B cell (primary cell): ENCODE measurements at regions of chr1 and their contacts with region 1.

Region 1: GRCh38 chr1:167936068-167936929 is at the start of gene DCAF6:
- DNase-seq: peak; percentile 99
- ATAC-seq: peak; percentile 78
- H3K4me3 ChIP-seq: peak within 1 kb of the TSS; percentile 79 to 96 (median 94)
- H3K4me3 Mint-ChIP-seq: peak within 1 kb of the TSS; percentile 95
- H3K27ac ChIP-seq: peak within 1 kb of the TSS; percentile 87 to 95
- H3K27ac Mint-ChIP-seq: peak within 1 kb of the TSS; percentile 100
- H3K4me1 ChIP-seq: peaks cover 10 to 27% of the 10 kb centered on the region in 2 donors
- H3K4me1 Mint-ChIP-seq: peaks cover 35% of the 10 kb centered on the region
- H3K27me3 ChIP-seq: no peaks in the 10 kb centered on the region
- H3K27me3 Mint-ChIP-seq: no peaks in the 10 kb centered on the region
- CTCF ChIP-seq: no peak
- total RNA-seq, gene DCAF6: 40.0 and 40.4 TPM in 2 replicates

Region 2: DNA sequence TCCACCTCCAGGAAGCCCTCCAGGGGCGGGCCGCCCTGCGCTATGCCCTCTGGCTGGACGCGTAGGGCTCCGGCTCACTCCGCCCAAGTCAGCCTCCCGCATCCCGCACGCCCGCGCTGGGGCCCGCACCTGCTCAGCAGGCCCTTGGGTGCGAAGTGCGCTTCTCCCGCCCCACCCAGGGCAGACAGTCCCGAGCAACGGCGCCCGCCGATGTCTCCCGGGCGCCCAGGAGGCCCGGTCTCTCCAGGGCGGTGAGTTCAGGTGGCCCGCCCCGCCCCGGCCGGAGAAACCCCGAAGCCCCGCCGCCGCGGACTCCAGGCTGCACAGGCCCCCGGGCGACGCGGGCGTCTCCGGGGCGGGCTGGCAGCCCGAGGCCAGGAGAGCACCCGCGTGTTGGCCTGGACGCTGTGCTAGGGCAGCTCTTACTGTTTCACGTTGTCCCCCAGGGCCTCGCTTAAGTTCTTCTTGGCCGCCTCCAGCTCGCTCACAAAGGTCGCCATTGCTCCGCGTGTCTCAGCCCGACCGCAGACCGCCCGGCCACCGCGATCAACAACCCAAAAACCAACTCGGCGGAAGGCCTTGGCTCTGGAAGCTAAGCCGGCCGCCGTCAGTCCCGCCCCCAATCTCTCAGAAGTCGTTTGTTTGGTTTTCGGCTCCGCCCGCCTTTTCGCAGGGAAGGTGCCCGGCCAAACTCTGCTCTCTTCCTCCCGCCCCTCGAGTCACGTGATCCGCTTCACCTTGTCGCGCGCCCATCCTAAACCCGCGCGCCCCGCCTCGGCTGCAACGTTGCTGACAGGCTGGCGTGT is 1060.4 kb before region 1 on chr1 and contains the start of gene TADA1:
- CTCF ChIA-PET with region 1: interaction called, 3 read pairs
- POLR2A ChIA-PET with region 1: interaction called, 4 read pairs
- intact Hi-C with region 1: loop called (anchors 1 kb)
- DNase-seq: peak; percentile 99
- ATAC-seq: peak; percentile 92
- H3K4me3 ChIP-seq: peak within 1 kb of the TSS; percentile 44 to 80 (median 74)
- H3K4me3 Mint-ChIP-seq: peak within 1 kb of the TSS; percentile 98
- H3K27ac ChIP-seq: peak within 1 kb of the TSS; percentile 68 to 86
- H3K27ac Mint-ChIP-seq: peak within 1 kb of the TSS; percentile 99
- H3K4me1 ChIP-seq: peaks cover 12 to 13% of the 10 kb centered on the region in 2 donors
- H3K4me1 Mint-ChIP-seq: peaks cover 38% of the 10 kb centered on the region
- H3K27me3 ChIP-seq: no peaks in the 10 kb centered on the region
- H3K27me3 Mint-ChIP-seq: no peaks in the 10 kb centered on the region
- CTCF ChIP-seq: no peak
- total RNA-seq, gene TADA1: 12.9 and 13.1 TPM in 2 replicates

Region 3: GRCh38 chr1:167328816-167329483 is 607.3 kb before region 1 on chr1:
- CTCF ChIA-PET with region 1: no interaction called
- POLR2A ChIA-PET with region 1: no interaction called
- intact Hi-C with region 1: loop called (anchors 2 kb)
- DNase-seq: peak; percentile 88
- ATAC-seq: peak; percentile 86
- H3K4me3 ChIP-seq: peak overlapping the region; percentile 46 to 67 (median 62)
- H3K4me3 Mint-ChIP-seq: peak overlapping the region; percentile 78
- H3K27ac ChIP-seq: peak overlapping the region; percentile 85 to 86
- H3K27ac Mint-ChIP-seq: peak overlapping the region; percentile 91
- H3K4me1 ChIP-seq: peaks cover 36 to 54% of the 10 kb centered on the region in 2 donors
- H3K4me1 Mint-ChIP-seq: peaks cover 59% of the 10 kb centered on the region
- H3K27me3 ChIP-seq: no peaks in the 10 kb centered on the region
- H3K27me3 Mint-ChIP-seq: no peaks in the 10 kb centered on the region
- CTCF ChIP-seq: no peak

Region 4: GRCh38 chr1:167412072-167412471 is 524.2 kb before region 1 on chr1:
- CTCF ChIA-PET with region 1: no interaction called
- POLR2A ChIA-PET with region 1: no interaction called
- intact Hi-C with region 1: no loop called
- DNase-seq: no peak
- ATAC-seq: no peak
- H3K4me3 ChIP-seq: no peak overlapping the region
- H3K4me3 Mint-ChIP-seq: no peak overlapping the region
- H3K27ac ChIP-seq: no peak overlapping the region
- H3K27ac Mint-ChIP-seq: peak overlapping the region; percentile 37
- H3K4me1 ChIP-seq: no peaks in the 10 kb centered on the region
- H3K4me1 Mint-ChIP-seq: peaks cover 8% of the 10 kb centered on the region
- H3K27me3 ChIP-seq: no peaks in the 10 kb centered on the region
- H3K27me3 Mint-ChIP-seq: no peaks in the 10 kb centered on the region
- CTCF ChIP-seq: no peak

Region 5: GRCh38 chr1:167617153-167618147 is 318.8 kb before region 1 on chr1:
- CTCF ChIA-PET with region 1: no interaction called
- POLR2A ChIA-PET with region 1: no interaction called
- intact Hi-C with region 1: loop called (anchors 2 kb)
- DNase-seq: peak; percentile 94
- ATAC-seq: peak; percentile 90
- H3K4me3 ChIP-seq: peak overlapping the region; percentile 42 to 81 (median 58)
- H3K4me3 Mint-ChIP-seq: peak overlapping the region; percentile 84
- H3K27ac ChIP-seq: peak overlapping the region; percentile 89 to 97
- H3K27ac Mint-ChIP-seq: peak overlapping the region; percentile 92
- H3K4me1 ChIP-seq: peaks cover 87 to 92% of the 10 kb centered on the region in 2 donors
- H3K4me1 Mint-ChIP-seq: peaks cover 86% of the 10 kb centered on the region
- H3K27me3 ChIP-seq: no peaks in the 10 kb centered on the region
- H3K27me3 Mint-ChIP-seq: no peaks in the 10 kb centered on the region
- CTCF ChIP-seq: no peak

Region 6: DNA sequence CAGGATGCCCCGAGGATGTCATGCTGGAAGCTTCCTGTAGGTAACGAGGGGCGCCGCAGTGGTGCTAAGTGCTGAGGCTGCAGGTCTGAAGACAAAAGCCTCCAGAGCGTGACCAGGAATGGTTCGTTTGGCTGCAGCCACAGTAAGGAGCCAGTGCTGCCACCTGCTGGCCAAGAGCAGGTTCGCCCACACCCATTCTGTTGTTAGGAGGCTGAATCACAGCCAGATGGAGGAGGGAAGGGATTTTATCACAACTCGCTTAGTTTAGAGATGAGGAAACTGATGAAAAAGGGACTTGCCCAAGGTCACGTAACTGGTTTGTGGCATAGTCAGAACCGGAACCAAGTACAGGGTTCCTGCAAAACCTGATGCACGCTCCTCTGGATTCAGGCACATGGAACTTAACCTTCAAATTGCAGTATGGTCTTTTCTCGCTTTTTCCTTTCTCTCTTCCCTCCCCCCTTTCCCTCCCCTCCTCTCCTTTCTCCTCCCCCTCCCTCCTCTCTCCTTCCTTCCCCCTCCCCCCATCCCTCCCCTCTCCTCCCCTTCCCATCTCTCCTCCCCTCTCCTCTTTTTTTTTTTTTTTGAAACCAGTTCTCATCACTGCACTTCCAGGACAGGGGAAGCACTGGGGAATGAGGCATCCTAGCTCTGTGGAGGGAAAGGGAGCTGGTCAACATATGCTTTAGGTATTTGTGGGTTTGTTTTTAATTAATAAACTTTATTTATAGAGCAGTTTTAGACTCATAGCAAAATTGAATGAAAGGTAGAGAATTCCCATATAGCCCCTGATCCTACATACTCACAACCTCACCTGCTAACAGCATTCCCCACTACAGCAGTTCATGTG is 132.7 kb before region 1 on chr1:
- CTCF ChIA-PET with region 1: interaction called, 4 read pairs
- POLR2A ChIA-PET with region 1: no interaction called
- intact Hi-C with region 1: loop called (anchors 2 kb)
- DNase-seq: peak; percentile 92
- ATAC-seq: peak; percentile 98
- H3K4me3 ChIP-seq: no peak overlapping the region
- H3K4me3 Mint-ChIP-seq: peak overlapping the region; percentile 18
- H3K27ac ChIP-seq: no peak overlapping the region
- H3K27ac Mint-ChIP-seq: peak overlapping the region; percentile 6
- H3K4me1 ChIP-seq: peaks cover 13 to 16% of the 10 kb centered on the region in 2 donors
- H3K4me1 Mint-ChIP-seq: peaks cover 23% of the 10 kb centered on the region
- H3K27me3 ChIP-seq: no peaks in the 10 kb centered on the region
- H3K27me3 Mint-ChIP-seq: no peaks in the 10 kb centered on the region
- CTCF ChIP-seq: peak; percentile 93

Region 7: DNA sequence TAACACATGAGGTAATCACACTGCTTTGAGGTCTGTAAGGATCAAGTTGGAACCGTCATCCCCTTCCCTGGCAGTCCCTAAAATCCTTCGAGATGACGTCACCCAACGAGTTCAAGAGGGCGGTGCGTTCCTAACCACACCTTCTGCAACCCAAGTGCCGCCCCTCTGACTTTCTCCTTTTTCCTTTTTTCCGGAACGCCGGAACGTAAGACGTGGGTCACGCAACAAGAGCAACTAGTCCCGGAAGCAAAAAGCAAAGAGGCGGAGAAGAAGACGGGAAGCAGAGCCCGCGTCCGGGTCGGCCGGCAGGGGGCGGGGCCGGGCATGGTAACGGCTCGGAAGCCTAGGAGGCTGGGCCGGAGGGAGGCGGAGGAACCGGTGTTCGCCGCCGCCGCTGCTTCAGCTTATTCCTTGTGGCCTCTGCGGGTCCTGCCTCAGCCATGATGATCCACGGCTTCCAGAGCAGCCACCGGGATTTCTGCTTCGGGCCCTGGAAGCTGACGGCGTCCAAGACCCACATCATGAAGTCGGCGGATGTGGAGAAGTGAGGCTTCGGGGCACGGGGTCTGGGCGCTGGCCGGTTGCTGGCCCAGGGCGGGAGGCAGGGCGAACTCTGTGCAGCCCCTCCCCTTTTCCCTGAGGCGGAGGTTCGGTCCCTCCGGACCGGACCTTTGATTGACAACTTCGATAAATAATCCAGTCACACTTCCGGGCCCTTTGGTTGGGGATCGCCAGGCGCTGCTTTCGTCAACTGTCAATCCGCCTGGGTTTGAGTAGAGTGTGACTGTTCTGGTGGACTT is 242.5 kb after region 1 on chr1 and contains the start of gene TIPRL:
- CTCF ChIA-PET with region 1: no interaction called
- POLR2A ChIA-PET with region 1: no interaction called
- intact Hi-C with region 1: loop called (anchors 1 kb)
- DNase-seq: peak; percentile 96
- ATAC-seq: peak; percentile 92
- H3K4me3 ChIP-seq: peak within 1 kb of the TSS; percentile 87 to 97 (median 91)
- H3K4me3 Mint-ChIP-seq: peak within 1 kb of the TSS; percentile 47
- H3K27ac ChIP-seq: peak within 1 kb of the TSS; percentile 83 to 98
- H3K27ac Mint-ChIP-seq: peak within 1 kb of the TSS; percentile 15
- H3K4me1 ChIP-seq: peaks cover 17 to 18% of the 10 kb centered on the region in 2 donors
- H3K4me1 Mint-ChIP-seq: peaks cover 1% of the 10 kb centered on the region
- H3K27me3 ChIP-seq: peaks cover 0 to 5% (median 0%) of the 10 kb centered on the region in 4 experiments
- H3K27me3 Mint-ChIP-seq: peaks cover 4% of the 10 kb centered on the region
- CTCF ChIP-seq: peak; percentile 73
- total RNA-seq, gene TIPRL: 22.7 and 24.9 TPM in 2 replicates

Region 8: GRCh38 chr1:168342572-168343280 is 406.4 kb after region 1 on chr1:
- CTCF ChIA-PET with region 1: no interaction called
- POLR2A ChIA-PET with region 1: no interaction called
- intact Hi-C with region 1: loop called (anchors 10 kb)
- DNase-seq: peak; percentile 89
- ATAC-seq: peak; percentile 100
- H3K4me3 ChIP-seq: no peak overlapping the region
- H3K4me3 Mint-ChIP-seq: peak overlapping the region; percentile 48
- H3K27ac ChIP-seq: no peak overlapping the region
- H3K27ac Mint-ChIP-seq: peak overlapping the region; percentile 57
- H3K4me1 ChIP-seq: peaks cover 3 to 7% of the 10 kb centered on the region in 2 donors
- H3K4me1 Mint-ChIP-seq: peaks cover 6% of the 10 kb centered on the region
- H3K27me3 ChIP-seq: no peaks in the 10 kb centered on the region
- H3K27me3 Mint-ChIP-seq: peaks cover 5% of the 10 kb centered on the region
- CTCF ChIP-seq: peak; percentile 87